ENCODE measurements at regions of chr12 and their contacts with region 1.

Region 1: DNA sequence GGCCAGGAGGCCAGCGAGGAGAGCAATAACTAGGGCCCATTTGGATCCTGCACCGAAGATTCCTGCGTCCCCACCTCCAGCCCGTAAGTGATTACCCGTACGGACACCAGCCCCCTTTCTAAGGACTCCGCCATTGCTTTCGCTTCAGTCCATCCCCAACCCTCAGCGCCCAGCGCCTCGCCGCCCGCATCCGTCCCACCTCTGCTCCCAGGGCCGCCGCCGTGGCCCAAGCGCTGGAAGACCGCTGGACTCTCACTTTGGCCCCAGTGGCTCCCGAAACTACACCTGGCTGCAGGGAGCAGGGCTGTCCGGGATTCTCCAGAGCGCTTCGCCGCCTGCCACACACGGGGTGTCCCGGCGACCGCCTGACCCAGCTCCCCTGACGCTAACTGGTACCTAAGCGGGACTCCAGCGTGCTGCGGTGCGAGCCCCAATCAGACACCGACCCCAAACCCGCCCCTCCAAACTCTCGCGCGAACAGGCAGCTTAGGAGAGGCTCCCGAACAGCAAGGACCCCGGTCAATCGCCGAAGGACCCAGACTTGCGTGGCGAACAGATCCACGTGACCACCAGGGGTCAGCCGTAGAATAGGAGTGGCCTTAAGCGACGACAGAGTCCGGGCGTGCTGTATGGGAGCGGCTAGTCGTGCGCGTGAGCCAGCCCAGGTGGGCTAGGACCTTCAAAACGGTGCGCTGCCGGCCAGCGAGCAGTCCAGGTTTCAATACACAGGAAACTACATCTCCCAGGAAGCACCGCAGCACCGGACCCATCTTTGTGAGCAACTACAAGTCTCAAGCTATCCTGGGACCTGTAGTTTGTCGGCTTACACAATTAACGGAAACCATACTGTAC is at the start of gene CNPY2:
- DNase-seq: peak; percentile 98
- ATAC-seq: peak; percentile 93
- H3K4me3 Mint-ChIP-seq: peak within 1 kb of the TSS; percentile 98
- H3K27ac Mint-ChIP-seq: peak within 1 kb of the TSS; percentile 98
- H3K4me1 Mint-ChIP-seq: peaks cover 20% of the 10 kb centered on the region
- H3K27me3 Mint-ChIP-seq: no peaks in the 10 kb centered on the region
- total RNA-seq, gene CNPY2: 110 to 161 TPM

Region 2: GRCh38 chr12:55973598-55974307 is 342.1 kb before region 1 on chr12 and contains the start of gene RAB5B:
- CTCF ChIA-PET with region 1: no interaction called
- DNase-seq: peak; percentile 100
- ATAC-seq: peak; percentile 93
- H3K4me3 Mint-ChIP-seq: no peak within 1 kb of the TSS
- H3K27ac Mint-ChIP-seq: no peak within 1 kb of the TSS
- H3K4me1 Mint-ChIP-seq: peaks cover 29% of the 10 kb centered on the region
- H3K27me3 Mint-ChIP-seq: no peaks in the 10 kb centered on the region
- total RNA-seq, gene RAB5B: 46.4 to 55.6 TPM

Region 3: GRCh38 chr12:56461235-56462159 is 145.6 kb after region 1 on chr12:
- CTCF ChIA-PET with region 1: interaction called, 17 read pairs
- DNase-seq: no peak
- ATAC-seq: no peak
- H3K4me3 Mint-ChIP-seq: no peak overlapping the region
- H3K27ac Mint-ChIP-seq: no peak overlapping the region
- H3K4me1 Mint-ChIP-seq: peaks cover 5% of the 10 kb centered on the region
- H3K27me3 Mint-ChIP-seq: no peaks in the 10 kb centered on the region

Measured in activated CD8-positive, alpha-beta memory T cell treated with anti-CD3 and anti-CD28 coated beads, Interleukin-2, amount 10 ng/mL, durations not matched to agents 7 days and 5 days (primary cell).